CD14-positive monocyte (primary cell): ENCODE measurements at regions of chr10 and their contacts with region 1.

Region 1: DNA sequence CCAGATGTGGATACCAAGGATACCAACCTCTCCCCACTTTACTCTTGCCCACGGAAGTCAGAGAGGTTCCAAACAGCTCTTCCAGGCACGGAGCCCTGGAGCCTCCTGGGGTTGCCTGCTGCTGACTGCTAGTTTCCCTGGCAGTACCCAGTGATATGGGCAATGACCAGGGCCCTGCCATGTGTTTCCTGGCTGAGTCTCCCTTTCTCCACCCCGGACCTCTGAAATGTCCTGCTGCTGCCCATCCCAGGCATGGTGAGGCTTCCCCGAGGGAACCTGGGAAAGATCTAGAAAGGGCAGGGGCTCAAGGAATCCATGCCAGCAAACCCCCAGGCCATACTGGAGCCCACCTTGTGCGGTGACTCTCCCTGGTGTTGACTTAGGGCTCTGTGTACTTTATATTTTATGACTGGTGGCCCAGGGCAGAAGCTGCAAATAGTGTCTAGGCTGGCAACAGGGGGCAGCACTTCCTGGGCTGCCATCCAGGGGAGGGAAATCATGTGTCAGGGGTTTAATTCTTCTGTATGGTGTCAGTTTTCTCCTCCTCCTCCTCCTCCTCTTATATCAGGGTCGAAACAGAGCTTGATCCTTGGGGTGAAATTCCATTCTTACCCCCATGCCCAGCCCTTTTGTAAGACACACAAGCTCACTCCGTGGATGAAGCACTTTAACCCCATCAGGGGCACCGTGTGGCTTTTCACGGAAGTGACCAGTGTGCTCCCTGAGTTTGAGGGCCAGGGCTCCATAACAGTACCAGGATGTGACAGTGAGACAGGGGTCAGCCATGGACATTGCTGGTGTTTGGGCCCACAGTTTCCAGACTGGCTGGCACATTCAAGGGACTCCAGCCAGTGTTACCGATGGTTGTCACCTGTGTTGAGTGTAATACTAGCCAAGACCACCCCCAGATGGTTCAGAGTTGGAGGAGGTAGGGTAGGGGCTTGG is 62.4 kb upstream of the GDF10 start:
- DNase-seq: no peak
- H3K4me3 ChIP-seq: no peak overlapping the region
- H3K4me3 Mint-ChIP-seq: no peak overlapping the region
- H3K27ac ChIP-seq: no peak overlapping the region
- H3K27ac Mint-ChIP-seq: no peak overlapping the region
- H3K4me1 ChIP-seq: no peaks in the 10 kb centered on the region
- H3K4me1 Mint-ChIP-seq: no peaks in the 10 kb centered on the region
- H3K27me3 ChIP-seq: no peaks in the 10 kb centered on the region
- H3K27me3 Mint-ChIP-seq: peaks cover 0 to 2% (median 2%) of the 10 kb centered on the region in 3 donors
- CTCF ChIP-seq: no peak

Region 2: GRCh38 chr10:47013507-47014154 is 224.0 kb before region 1 on chr10:
- intact Hi-C with region 1: no loop called
- DNase-seq: no peak
- H3K4me3 ChIP-seq: no peak overlapping the region
- H3K4me3 Mint-ChIP-seq: no peak overlapping the region
- H3K27ac ChIP-seq: no peak overlapping the region
- H3K27ac Mint-ChIP-seq: no peak overlapping the region
- H3K4me1 ChIP-seq: no peaks in the 10 kb centered on the region
- H3K4me1 Mint-ChIP-seq: no peaks in the 10 kb centered on the region
- H3K27me3 ChIP-seq: no peaks in the 10 kb centered on the region
- H3K27me3 Mint-ChIP-seq: peaks cover 0 to 7% (median 2%) of the 10 kb centered on the region in 3 donors
- CTCF ChIP-seq: no peak

Region 3: GRCh38 chr10:47195274-47195885 is 42.2 kb before region 1 on chr10:
- intact Hi-C with region 1: loop called in 1 of 2 experiments (anchors 5 kb)
- DNase-seq: no peak
- H3K4me3 ChIP-seq: no peak overlapping the region
- H3K4me3 Mint-ChIP-seq: no peak overlapping the region
- H3K27ac ChIP-seq: no peak overlapping the region
- H3K27ac Mint-ChIP-seq: no peak overlapping the region
- H3K4me1 ChIP-seq: no peaks in the 10 kb centered on the region
- H3K4me1 Mint-ChIP-seq: no peaks in the 10 kb centered on the region
- H3K27me3 ChIP-seq: no peaks in the 10 kb centered on the region
- H3K27me3 Mint-ChIP-seq: peaks cover 0 to 7% (median 2%) of the 10 kb centered on the region in 3 donors
- CTCF ChIP-seq: no peak

Region 4: GRCh38 chr10:47287365-47287802 is 49.8 kb after region 1 on chr10:
- intact Hi-C with region 1: loop called in 1 of 2 experiments (anchors 5 kb)
- DNase-seq: no peak
- H3K4me3 ChIP-seq: no peak overlapping the region
- H3K4me3 Mint-ChIP-seq: no peak overlapping the region
- H3K27ac ChIP-seq: no peak overlapping the region
- H3K27ac Mint-ChIP-seq: no peak overlapping the region
- H3K4me1 ChIP-seq: peaks cover 19 to 21% of the 10 kb centered on the region in 2 donors
- H3K4me1 Mint-ChIP-seq: peaks cover 30% of the 10 kb centered on the region
- H3K27me3 ChIP-seq: no peaks in the 10 kb centered on the region
- H3K27me3 Mint-ChIP-seq: peaks cover 0 to 13% (median 13%) of the 10 kb centered on the region in 3 donors
- CTCF ChIP-seq: no peak

Region 5: DNA sequence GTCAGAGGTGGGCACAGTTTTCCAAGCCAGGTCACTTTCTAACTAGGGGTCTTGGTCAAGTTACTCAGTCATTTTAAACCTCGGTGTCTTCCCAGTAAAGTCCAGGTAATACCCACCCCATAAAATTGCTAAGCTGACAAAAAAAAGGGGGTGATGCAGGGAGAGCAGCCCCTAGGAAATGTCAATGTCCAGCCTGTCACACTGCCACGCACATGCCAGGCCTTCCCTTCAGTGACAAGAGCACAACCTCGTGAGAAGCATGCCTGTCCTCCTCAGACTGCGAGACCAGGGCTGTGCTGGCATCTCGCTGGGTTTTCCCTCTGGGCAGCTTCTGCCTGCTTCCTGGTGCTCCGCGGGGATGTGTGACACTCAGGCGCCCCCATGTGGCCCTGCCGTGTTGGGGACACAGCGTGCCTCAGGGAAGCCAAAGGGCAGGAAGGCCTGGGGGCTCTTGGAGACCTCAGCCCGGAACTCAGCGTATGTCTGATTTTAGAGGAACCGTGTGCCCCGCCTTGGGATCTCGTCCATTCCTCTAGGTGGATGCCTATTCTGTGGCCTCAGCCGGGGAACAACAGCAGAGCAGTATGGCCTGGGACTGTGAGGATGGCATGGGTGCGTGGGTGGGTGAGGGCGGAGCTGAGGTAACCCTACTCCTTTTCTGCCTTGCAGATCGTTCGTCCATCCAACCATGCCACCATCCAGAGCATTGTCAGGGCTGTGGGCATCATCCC is 74.5 kb after region 1 on chr10:
- intact Hi-C with region 1: loop called in 1 of 2 experiments (anchors 10 kb)
- DNase-seq: peak; percentile 67 to 84 (median 76)
- H3K4me3 ChIP-seq: no peak overlapping the region
- H3K4me3 Mint-ChIP-seq: no peak overlapping the region
- H3K27ac ChIP-seq: no peak overlapping the region
- H3K27ac Mint-ChIP-seq: no peak overlapping the region
- H3K4me1 ChIP-seq: no peaks in the 10 kb centered on the region
- H3K4me1 Mint-ChIP-seq: peaks cover 6% of the 10 kb centered on the region
- H3K27me3 ChIP-seq: no peaks in the 10 kb centered on the region
- H3K27me3 Mint-ChIP-seq: peaks cover 5 to 15% (median 10%) of the 10 kb centered on the region in 3 donors
- CTCF ChIP-seq: peak; percentile 93